CD4-positive, alpha-beta T cell (primary cell): ENCODE measurements at regions of chr2 and their contacts with region 1.

Region 1: DNA sequence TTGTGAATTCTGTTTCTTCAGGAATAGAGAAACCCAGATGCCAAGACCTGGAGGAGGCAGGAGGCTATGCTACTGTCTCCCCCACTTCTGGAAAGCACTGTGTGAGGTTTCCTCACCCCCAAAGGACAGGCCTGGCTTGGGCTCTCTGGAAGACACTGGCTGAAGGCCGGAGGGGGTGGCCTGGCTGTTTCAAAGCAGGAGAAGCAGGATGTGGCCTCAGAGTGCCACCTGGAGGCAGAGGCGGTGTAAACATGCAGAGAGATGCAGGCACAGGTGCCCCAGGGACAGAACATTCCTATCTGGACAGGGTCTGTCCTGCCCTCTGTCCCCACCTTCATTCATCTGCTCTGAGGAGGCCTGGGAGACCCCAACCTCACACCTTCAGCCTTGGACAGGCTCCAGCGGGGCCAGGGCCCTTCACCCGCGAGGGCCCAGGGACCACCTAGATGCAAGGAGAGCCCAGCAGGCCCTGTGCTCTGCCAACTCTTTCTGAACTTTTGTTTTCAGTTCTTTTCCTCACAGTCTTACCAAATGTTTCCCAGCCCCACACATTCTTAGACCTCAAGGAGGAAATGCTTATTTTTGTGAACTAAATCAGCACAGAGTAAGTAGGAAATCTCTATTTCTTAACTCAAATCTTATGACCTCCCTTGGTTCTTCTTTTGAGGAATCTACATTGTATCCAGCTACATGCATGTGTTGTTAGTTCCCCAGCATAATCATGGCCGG is 79.2 kb downstream of the LONRF2 start:
- DNase-seq: peak; percentile 19 to 63 (median 32)
- ATAC-seq: no peak
- H3K4me3 ChIP-seq: no peak overlapping the region
- H3K4me3 Mint-ChIP-seq: no peak overlapping the region
- H3K27ac ChIP-seq: no peak overlapping the region
- H3K27ac Mint-ChIP-seq: no peak overlapping the region
- H3K4me1 ChIP-seq: no peaks in the 10 kb centered on the region
- H3K4me1 Mint-ChIP-seq: no peaks in the 10 kb centered on the region
- H3K27me3 ChIP-seq: peaks cover 0 to 3% of the 10 kb centered on the region in 2 experiments
- H3K27me3 Mint-ChIP-seq: peaks cover 2% of the 10 kb centered on the region
- CTCF ChIP-seq: peak; percentile 62

Region 2: DNA sequence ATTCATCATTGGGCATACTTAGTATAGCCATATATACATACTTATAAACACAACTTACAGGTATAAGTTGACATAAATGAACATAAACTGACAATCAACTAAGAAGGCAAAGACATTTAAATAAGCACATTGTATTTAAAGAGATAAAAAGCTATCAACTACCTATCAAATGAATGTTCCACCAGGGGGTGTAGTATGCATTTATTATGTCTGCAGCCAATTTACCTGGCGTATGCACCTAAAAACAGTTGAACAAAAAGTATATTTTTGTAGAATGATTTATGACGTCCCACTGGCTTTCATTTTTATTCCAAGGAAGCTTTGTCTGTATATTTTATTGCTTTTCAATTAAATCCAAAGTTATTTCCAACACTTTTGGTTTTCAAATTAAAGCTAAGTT is 424.2 kb before region 1 on chr2:
- CTCF ChIA-PET with region 1: no interaction called
- POLR2A ChIA-PET with region 1: no interaction called
- intact Hi-C with region 1: loop called in 1 of 2 experiments (anchors 5 kb)
- DNase-seq: peak in 3 of 14 experiments; percentile 10 to 19 (median 17)
- ATAC-seq: no peak
- H3K4me3 ChIP-seq: no peak overlapping the region
- H3K4me3 Mint-ChIP-seq: no peak overlapping the region
- H3K27ac ChIP-seq: no peak overlapping the region
- H3K27ac Mint-ChIP-seq: no peak overlapping the region
- H3K4me1 ChIP-seq: no peaks in the 10 kb centered on the region
- H3K4me1 Mint-ChIP-seq: no peaks in the 10 kb centered on the region
- H3K27me3 ChIP-seq: no peaks in the 10 kb centered on the region
- H3K27me3 Mint-ChIP-seq: no peaks in the 10 kb centered on the region
- CTCF ChIP-seq: peak; percentile 9